ENCODE measurements at regions of chr12 and their contacts with region 1.

Region 1: GRCh38 chr12:5988659-5989116 is 43.6 kb upstream of the ANO2 start:
- DNase-seq: peak; percentile 45 to 72 (median 54)
- H3K4me3 ChIP-seq: no peak overlapping the region
- H3K4me3 Mint-ChIP-seq: no peak overlapping the region
- H3K27ac ChIP-seq: no peak overlapping the region
- H3K27ac Mint-ChIP-seq: peak overlapping the region in 1 of 8 donors; percentile 78
- H3K4me1 ChIP-seq: no peaks in the 10 kb centered on the region
- H3K4me1 Mint-ChIP-seq: peaks cover 2 to 4% (median 3%) of the 10 kb centered on the region in 3 donors
- H3K27me3 ChIP-seq: no peaks in the 10 kb centered on the region
- H3K27me3 Mint-ChIP-seq: peaks cover 0 to 7% of the 10 kb centered on the region in 2 donors

Region 2: DNA sequence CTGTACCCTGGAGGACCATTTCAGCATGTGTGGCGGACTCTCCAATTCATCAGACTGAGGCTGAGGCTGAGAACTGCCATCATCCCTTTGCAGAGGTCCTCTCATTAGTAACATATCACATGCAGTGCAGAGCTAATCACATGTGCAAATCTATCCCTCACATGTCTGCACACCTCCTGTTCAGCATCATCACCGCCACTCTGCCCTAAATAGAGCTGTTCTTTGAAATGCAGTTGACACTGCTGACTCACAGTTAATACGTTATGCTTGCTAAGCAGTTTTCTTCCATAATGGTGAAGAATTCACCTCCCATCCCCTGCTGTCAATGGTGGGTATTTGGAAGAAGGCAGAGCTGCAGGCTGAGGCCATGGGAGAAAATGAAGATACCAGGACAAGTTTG is 41.4 kb after region 1 on chr12:
- CTCF ChIA-PET with region 1: interaction called, 12 read pairs
- POLR2A ChIA-PET with region 1: no interaction called
- DNase-seq: no peak
- H3K4me3 ChIP-seq: no peak overlapping the region
- H3K4me3 Mint-ChIP-seq: no peak overlapping the region
- H3K27ac ChIP-seq: no peak overlapping the region
- H3K27ac Mint-ChIP-seq: no peak overlapping the region
- H3K4me1 ChIP-seq: no peaks in the 10 kb centered on the region
- H3K4me1 Mint-ChIP-seq: no peaks in the 10 kb centered on the region
- H3K27me3 ChIP-seq: no peaks in the 10 kb centered on the region
- H3K27me3 Mint-ChIP-seq: peaks cover 7 to 19% of the 10 kb centered on the region in 2 donors

Region 3: GRCh38 chr12:6039894-6040568 is 51.3 kb after region 1 on chr12:
- CTCF ChIA-PET with region 1: interaction called, 59 read pairs
- POLR2A ChIA-PET with region 1: interaction called, 4 read pairs
- DNase-seq: peak in 4 of 5 donors; percentile 26 to 52 (median 34)
- H3K4me3 ChIP-seq: no peak overlapping the region
- H3K4me3 Mint-ChIP-seq: peak overlapping the region in 3 of 7 donors; percentile 46 to 55 (median 54)
- H3K27ac ChIP-seq: no peak overlapping the region
- H3K27ac Mint-ChIP-seq: peak overlapping the region in 1 of 8 donors; percentile 26
- H3K4me1 ChIP-seq: no peaks in the 10 kb centered on the region
- H3K4me1 Mint-ChIP-seq: peaks cover 2 to 5% (median 3%) of the 10 kb centered on the region in 3 donors
- H3K27me3 ChIP-seq: no peaks in the 10 kb centered on the region
- H3K27me3 Mint-ChIP-seq: peaks cover 1 to 13% of the 10 kb centered on the region in 2 donors